Activated CD8-positive, alpha-beta memory T cell treated with anti-CD3 and anti-CD28 coated beads, Interleukin-2, amount 10 ng/mL, durations not matched to agents 7 days and 5 days (primary cell): ENCODE measurements at regions of chr19 and their contacts with region 1.

Region 1: DNA sequence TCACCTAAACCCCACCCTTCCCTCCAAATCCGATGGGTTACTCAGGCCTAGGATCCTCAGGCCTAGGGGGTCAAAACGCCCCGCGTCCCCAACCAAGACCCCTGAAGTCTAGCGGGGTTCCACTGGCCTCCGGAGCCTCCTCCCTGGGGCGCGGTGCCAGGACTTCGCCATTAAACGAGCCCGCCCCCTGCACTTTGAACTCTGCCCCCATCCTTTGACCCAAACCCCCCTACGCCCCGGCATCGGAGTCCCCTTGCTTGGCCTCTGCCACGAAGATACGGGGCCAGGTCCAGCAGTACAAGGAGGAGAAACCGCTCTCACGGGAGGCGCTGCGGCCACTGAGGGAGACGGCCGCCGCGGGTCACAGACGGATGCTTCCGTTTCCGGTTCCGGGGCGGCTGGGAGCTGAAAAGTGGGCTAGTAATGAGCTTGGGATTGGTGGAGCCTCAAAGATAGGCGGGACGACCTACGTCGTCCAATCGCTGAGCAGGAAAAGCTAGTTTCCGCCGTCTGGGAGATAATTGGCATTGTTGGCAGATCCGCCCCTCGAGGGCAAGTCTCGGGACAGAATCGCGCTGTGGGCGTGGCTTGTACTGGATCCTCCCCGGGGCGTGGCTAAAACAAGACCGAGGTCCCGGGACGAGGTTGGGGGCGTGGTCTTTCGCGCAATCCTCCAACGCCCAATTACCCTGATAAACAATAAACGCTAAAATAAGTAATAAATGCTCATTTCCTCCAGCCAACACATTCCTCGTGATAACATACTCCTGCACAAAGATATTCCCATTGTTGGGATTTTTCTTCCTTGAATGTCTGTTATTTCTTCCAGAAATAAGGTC is 5.7 kb upstream of the ZNF77 start:
- DNase-seq: peak; percentile 100
- ATAC-seq: peak; percentile 98
- H3K4me3 Mint-ChIP-seq: peak overlapping the region; percentile 94
- H3K27ac Mint-ChIP-seq: peak overlapping the region; percentile 97
- H3K4me1 Mint-ChIP-seq: peaks cover 38% of the 10 kb centered on the region
- H3K27me3 Mint-ChIP-seq: no peaks in the 10 kb centered on the region

Region 2: GRCh38 chr19:2648528-2648937 is 302.0 kb before region 1 on chr19:
- CTCF ChIA-PET with region 1: interaction called, 22 read pairs
- DNase-seq: peak; percentile 79
- ATAC-seq: peak; percentile 87
- H3K4me3 Mint-ChIP-seq: no peak overlapping the region
- H3K27ac Mint-ChIP-seq: no peak overlapping the region
- H3K4me1 Mint-ChIP-seq: no peaks in the 10 kb centered on the region
- H3K27me3 Mint-ChIP-seq: no peaks in the 10 kb centered on the region

Region 3: DNA sequence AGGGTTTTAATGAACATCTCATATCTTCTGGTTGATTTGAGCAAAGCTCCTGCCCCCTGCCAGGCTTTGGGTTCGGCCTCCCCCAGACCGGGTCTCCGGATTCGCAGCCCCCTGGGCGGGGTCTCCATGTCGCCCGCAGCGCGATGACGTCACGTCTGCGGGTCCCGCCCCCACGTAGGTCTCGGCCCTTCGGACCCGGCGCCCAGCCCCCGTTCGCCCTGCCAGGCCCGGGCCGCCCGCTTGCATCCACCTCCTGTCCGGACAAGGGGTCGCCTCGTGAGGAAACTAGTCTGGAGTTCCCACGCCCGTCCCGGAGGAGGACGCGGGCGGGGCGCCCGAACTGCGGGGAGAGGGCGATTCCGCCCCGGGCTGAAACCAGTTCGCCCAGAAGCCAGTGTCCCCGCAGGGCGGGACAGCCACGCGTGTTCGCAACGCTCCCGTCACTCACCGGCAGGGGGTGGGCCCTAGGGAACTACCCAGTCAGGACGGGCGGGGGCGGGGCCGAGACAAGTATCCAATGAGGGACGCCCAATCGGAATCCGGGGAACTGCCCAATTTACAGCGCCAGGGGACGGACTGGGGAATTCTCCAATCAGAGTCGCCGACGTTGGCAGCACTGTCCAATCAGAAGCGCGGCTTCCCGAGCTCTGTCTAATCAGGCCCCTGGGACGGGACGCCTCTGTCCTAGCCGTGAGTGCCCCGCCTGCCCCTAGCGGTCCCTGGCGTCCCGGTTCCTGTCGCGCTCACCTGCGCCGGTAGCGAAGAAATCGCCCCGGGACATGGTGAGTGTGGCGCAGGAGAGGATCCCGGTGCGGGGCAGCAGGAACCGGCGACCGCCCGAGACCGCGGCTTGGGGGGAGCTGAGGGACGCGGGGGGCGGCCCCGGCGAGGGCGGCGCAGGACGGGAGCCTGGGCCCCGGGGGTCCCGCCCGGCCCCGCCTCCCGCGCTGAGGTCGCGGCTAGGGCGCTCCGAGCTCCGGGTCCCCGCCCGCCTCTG is 109.4 kb before region 1 on chr19 and contains the start of gene ZNF555:
- CTCF ChIA-PET with region 1: interaction called, 14 read pairs
- DNase-seq: peak; percentile 99
- ATAC-seq: peak; percentile 100
- H3K4me3 Mint-ChIP-seq: peak within 1 kb of the TSS; percentile 78
- H3K27ac Mint-ChIP-seq: peak within 1 kb of the TSS; percentile 78
- H3K4me1 Mint-ChIP-seq: peaks cover 10% of the 10 kb centered on the region
- H3K27me3 Mint-ChIP-seq: no peaks in the 10 kb centered on the region
- total RNA-seq, gene ZNF555: 2.5 to 3.1 TPM

Region 4: DNA sequence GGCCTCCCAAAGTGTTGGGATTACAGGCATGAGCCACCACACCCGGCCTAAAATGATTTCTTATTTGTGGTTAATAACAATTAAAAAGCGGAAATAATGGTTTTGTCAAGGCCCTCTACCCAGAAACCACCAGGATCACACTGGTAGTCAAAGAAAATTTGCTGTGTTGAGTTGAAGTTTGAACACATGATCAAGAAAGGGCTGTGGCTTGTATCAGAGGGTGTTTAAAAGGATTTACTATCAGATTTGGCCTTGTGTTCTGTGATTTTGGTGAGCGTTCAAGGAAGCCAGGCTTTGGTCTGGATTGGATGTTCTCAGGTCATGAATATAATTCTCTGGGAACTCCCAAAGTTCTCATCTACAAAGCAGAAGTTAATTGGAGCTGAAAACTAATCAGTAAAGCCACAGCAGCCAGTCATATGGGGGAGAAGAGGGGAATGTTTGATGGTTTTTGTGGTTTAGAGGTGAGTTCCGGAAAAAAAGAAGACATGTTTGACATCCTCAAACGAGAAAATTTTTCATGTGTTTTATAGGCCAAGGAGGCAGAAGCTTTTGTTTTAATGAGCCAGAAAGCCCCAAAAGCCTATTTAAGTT is 94.0 kb before region 1 on chr19:
- CTCF ChIA-PET with region 1: no interaction called
- DNase-seq: no peak
- ATAC-seq: no peak
- H3K4me3 Mint-ChIP-seq: no peak overlapping the region
- H3K27ac Mint-ChIP-seq: no peak overlapping the region
- H3K4me1 Mint-ChIP-seq: peaks cover 5% of the 10 kb centered on the region
- H3K27me3 Mint-ChIP-seq: no peaks in the 10 kb centered on the region

Region 5: GRCh38 chr19:2887391-2887914 is 63.1 kb before region 1 on chr19:
- CTCF ChIA-PET with region 1: interaction called, 22 read pairs
- DNase-seq: no peak
- ATAC-seq: no peak
- H3K4me3 Mint-ChIP-seq: no peak overlapping the region
- H3K27ac Mint-ChIP-seq: no peak overlapping the region
- H3K4me1 Mint-ChIP-seq: peaks cover 2% of the 10 kb centered on the region
- H3K27me3 Mint-ChIP-seq: no peaks in the 10 kb centered on the region

Region 6: DNA sequence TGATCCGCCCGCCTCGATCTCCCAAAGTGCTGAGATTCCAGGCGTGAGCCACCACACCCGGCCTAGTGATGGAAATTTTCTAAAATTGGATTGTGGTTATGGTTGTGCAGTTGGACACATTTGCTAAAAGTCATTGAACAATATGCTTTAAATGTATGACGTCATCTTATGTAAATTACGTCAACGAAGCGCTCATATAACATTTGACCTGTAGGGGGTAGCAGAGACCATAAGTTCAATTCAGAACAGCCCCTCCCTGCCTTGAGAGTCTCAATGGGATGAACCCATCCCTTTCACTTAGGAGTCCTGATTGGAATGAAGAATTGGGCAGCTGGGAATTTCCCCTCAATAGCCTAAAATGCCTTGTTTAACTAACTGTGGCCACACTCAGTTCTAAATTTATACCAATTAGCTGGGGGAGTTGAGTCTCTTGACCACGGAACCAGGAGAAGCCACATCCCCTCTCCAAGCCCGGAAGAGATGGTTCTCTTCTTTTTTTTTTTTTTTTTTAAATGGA is 11.6 kb after region 1 on chr19:
- CTCF ChIA-PET with region 1: interaction called, 43 read pairs
- DNase-seq: peak; percentile 51
- ATAC-seq: peak; percentile 75
- H3K4me3 Mint-ChIP-seq: no peak overlapping the region
- H3K27ac Mint-ChIP-seq: no peak overlapping the region
- H3K4me1 Mint-ChIP-seq: peaks cover 5% of the 10 kb centered on the region
- H3K27me3 Mint-ChIP-seq: peaks cover 3% of the 10 kb centered on the region

Region 7: GRCh38 chr19:3035542-3036118 is 85.1 kb after region 1 on chr19:
- CTCF ChIA-PET with region 1: interaction called, 18 read pairs
- DNase-seq: peak; percentile 98
- ATAC-seq: peak; percentile 96
- H3K4me3 Mint-ChIP-seq: peak overlapping the region; percentile 73
- H3K27ac Mint-ChIP-seq: peak overlapping the region; percentile 94
- H3K4me1 Mint-ChIP-seq: peaks cover 12% of the 10 kb centered on the region
- H3K27me3 Mint-ChIP-seq: peaks cover 28% of the 10 kb centered on the region

Region 8: GRCh38 chr19:3125900-3126524 is 175.5 kb after region 1 on chr19:
- CTCF ChIA-PET with region 1: interaction called, 13 read pairs
- DNase-seq: peak; percentile 69
- ATAC-seq: peak; percentile 93
- H3K4me3 Mint-ChIP-seq: no peak overlapping the region
- H3K27ac Mint-ChIP-seq: no peak overlapping the region
- H3K4me1 Mint-ChIP-seq: peaks cover 16% of the 10 kb centered on the region
- H3K27me3 Mint-ChIP-seq: no peaks in the 10 kb centered on the region